BJ (cell line): ENCODE measurements at regions of chr14 and their contacts with region 1.

Region 1: DNA sequence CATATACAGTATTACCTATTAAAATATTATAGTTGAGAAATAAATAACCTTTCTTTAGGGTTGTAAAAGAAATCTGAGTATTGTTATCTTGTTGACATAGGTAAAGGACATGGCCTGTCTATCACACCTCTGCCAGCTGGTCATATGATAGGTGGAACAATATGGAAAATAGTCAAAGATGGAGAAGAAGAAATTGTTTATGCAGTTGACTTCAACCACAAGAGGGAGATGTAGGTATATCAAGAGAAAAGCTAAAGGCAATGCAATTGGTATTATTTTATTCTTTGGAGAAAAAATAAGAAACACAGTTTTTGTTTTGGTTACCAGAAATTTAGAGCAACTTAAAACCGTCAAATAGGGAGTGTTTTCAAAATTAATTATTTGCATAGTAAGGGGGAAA is 13.5 kb downstream of the CPSF2 start:
- DNase-seq: no peak
- H3K4me3 ChIP-seq: no peak overlapping the region
- H3K27me3 ChIP-seq: no peaks in the 10 kb centered on the region
- CTCF ChIP-seq: peak; percentile 65

Region 2: DNA sequence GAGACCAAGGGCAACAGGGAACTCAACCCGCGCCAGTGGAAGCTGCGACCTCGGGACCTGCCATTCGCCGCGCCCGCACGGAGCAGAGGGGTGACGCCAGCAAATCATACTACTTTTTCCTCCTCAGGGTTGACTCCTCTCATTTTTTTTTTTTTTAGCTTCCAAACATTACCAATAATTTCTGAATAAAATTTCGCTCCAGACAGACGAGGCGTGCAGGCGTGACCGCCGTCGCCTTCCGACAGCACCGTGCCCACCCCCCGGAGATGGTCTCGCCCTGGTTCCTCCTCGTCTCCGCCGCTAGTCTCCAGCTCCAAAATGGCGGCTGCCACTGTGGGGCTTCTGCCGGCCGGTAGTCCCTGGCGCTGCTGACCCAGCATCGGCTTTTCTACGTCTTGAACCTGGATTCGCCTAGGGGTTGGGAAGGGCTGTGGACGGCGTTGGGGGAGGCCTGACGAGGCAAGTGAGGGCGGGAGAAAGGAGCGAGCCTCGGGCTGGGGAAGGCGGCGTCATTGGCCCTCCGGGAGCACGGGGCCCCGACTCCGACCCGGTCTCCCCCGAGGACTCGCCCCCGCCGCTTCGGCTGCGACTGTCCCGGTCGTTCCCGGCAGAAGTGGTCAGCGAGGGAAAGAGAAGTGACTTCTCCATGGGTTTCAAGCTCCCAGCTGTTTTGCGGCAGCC is 13.5 kb before region 1 on chr14 and contains the starts of genes CPSF2 and NDUFB1:
- CTCF ChIA-PET with region 1: interaction called, 26 read pairs
- POLR2A ChIA-PET with region 1: interaction called, 3 read pairs
- DNase-seq: no peak
- H3K4me3 ChIP-seq: peak within 1 kb of the TSS; percentile 82
- H3K27me3 ChIP-seq: no peaks in the 10 kb centered on the region
- CTCF ChIP-seq: no peak
- polyA plus RNA-seq, gene CPSF2: 14.2 and 35.7 TPM in 2 replicates
- polyA plus RNA-seq, gene NDUFB1: 163 and 327 TPM in 2 replicates

Region 3: DNA sequence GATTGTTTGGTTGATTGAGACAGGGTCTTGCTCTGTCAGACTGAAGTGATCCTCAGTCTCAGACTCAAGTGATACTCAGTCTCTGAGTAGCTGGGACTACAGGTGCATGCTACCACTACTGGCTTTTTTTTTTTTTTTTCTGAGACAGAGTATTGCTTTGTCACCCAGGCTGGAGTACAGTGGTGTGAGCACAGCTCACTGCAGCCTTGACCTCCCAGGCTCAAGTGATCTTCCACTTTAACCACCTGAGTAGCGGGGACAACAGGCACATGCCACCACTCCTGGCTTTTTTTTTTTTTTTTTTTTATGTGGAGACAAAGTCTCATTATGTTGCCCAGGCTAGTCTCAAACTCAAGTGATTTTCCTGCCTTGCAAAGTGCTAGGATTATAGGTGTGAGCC is 18.3 kb after region 1 on chr14:
- CTCF ChIA-PET with region 1: interaction called, 7 read pairs
- POLR2A ChIA-PET with region 1: interaction called, 14 read pairs
- DNase-seq: no peak
- H3K4me3 ChIP-seq: no peak overlapping the region
- H3K27me3 ChIP-seq: no peaks in the 10 kb centered on the region
- CTCF ChIP-seq: no peak

Region 4: DNA sequence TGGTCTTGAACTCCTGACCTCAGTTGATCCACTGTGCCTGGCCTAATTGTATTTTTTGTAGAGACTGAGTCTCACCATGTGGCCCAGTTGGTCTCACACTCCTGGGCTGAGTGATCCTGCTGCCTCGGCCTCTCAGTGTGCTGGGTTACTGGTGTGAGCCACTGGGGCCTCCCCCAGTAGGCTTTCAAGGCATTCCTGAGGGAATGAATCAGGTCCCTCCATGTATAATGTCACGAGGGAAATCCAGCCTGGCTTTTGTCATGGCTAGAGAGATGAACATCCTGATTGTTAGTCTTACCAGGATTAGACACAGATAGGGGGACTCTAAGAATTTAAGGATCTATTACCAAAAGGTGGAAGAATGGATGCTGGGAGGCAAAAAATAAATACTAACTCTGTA is 38.4 kb after region 1 on chr14:
- CTCF ChIA-PET with region 1: no interaction called
- POLR2A ChIA-PET with region 1: interaction called, 11 read pairs
- DNase-seq: no peak
- H3K4me3 ChIP-seq: no peak overlapping the region
- H3K27me3 ChIP-seq: no peaks in the 10 kb centered on the region
- CTCF ChIP-seq: no peak

Region 5: GRCh38 chr14:92456215-92457015 is 321.1 kb after region 1 on chr14:
- CTCF ChIA-PET with region 1: interaction called, 72 read pairs
- POLR2A ChIA-PET with region 1: no interaction called
- DNase-seq: no peak
- H3K4me3 ChIP-seq: no peak overlapping the region
- H3K27me3 ChIP-seq: peaks cover 6% of the 10 kb centered on the region
- CTCF ChIP-seq: peak; percentile 83

Region 6: DNA sequence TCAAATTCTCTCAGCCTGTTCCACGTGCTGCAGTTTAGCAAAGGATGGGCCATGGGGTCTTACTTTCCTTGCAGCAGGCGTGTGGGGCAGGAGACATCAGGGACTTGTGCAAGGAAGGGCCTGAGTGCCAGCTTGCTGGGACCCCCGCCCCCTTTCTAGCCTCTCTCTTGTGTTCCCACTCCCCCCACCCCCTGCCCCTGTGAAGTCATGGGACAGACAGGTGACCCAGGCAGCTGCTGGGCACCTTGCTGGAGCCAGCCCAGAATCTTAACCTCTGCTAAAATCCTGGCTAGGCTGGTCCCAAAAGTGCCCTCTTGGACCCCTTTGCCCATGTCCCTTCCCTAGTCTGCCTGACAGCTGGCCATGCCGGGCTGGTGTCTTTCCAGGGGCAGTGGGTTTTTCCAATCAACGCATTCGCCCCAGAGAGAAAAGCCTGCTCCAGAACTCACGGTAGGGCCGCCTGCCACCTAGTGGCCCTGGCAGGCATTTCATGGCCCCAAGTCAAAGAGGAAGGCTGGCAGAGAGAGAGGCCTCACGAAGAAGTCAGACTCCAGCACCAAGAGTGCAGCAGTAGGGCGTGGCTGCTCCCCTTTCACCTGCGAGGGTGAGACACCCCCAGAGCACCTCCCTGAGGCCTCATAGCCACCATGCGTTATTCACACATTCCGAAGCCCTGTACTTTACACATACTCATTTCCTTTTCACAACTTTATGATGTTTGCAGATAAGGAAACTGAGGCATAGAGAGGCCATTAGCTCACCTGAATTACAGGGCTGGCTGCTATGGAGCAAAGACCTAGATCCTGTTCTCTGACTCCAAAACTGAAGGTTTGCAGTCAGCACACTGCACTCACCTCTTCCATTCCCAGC is 545.7 kb after region 1 on chr14:
- CTCF ChIA-PET with region 1: interaction called, 23 read pairs
- POLR2A ChIA-PET with region 1: no interaction called
- DNase-seq: no peak
- H3K4me3 ChIP-seq: no peak overlapping the region
- H3K27me3 ChIP-seq: no peaks in the 10 kb centered on the region
- CTCF ChIP-seq: peak; percentile 93